Pancreas (tissue), 10 donors: ENCODE measurements at regions of chr2 and their contacts with region 1.

Region 1: DNA sequence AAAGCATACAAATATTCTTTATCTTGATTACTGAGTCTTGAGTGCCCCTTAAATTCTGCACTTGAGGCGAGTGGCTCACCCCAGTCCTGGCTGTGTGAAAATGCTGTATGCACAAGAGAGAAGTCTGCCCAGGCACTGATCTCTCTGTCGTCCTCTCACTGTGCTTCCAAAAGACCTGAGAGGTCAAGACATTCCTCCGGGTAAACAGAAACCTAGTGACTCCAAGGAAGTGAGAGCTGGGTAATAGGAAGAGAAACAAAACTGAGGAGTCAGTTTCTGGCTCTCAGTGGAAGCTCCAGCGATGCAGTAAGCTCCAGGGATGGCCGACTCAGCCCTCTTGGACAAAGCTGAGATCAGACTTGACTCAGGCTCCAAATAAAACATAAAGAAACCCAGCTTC is 70.9 kb downstream of the AAK1 start:
- DNase-seq: no peak
- ATAC-seq: peak in 3 of 4 donors; percentile 17 to 38 (median 34)
- H3K4me3 ChIP-seq: no peak overlapping the region
- H3K27ac ChIP-seq: no peak overlapping the region
- H3K4me1 ChIP-seq: peaks cover 14 to 23% (median 18%) of the 10 kb centered on the region in 3 donors
- H3K27me3 ChIP-seq: no peaks in the 10 kb centered on the region
- CTCF ChIP-seq: no peak

Region 2: DNA sequence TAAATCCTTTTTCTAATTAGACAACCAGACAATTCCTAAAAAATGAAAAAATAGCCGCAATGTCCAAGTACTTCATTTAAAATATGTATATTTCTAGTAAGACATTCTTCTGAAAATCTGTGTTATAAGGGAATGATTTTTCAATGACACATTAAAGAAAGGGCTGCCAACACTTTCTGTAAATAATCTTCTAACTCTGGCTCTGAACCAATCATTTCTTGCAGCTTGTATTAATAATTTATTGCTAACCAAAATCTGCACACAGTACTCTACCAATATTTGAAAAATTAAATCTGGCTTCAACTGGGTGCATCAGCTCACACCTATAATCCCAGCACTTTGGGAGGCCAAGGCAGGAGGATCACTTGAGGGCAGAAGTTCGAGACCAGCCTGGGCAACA is 143.7 kb before region 1 on chr2:
- intact Hi-C with region 1: no loop called
- DNase-seq: no peak
- ATAC-seq: peak; percentile 67 to 85 (median 82)
- H3K4me3 ChIP-seq: no peak overlapping the region
- H3K27ac ChIP-seq: peak overlapping the region in 2 of 4 donors; percentile 5 to 20
- H3K4me1 ChIP-seq: peaks cover 8 to 18% (median 12%) of the 10 kb centered on the region in 3 donors
- H3K27me3 ChIP-seq: no peaks in the 10 kb centered on the region
- CTCF ChIP-seq: no peak

Region 3: GRCh38 chr2:69634196-69634821 is 61.7 kb after region 1 on chr2:
- intact Hi-C with region 1: loop called in 1 of 3 experiments (anchors 10 kb)
- DNase-seq: no peak
- ATAC-seq: peak in 2 of 4 donors; percentile 30 to 38
- H3K4me3 ChIP-seq: no peak overlapping the region
- H3K27ac ChIP-seq: no peak overlapping the region
- H3K4me1 ChIP-seq: peaks cover 9 to 11% (median 10%) of the 10 kb centered on the region in 3 donors
- H3K27me3 ChIP-seq: no peaks in the 10 kb centered on the region
- CTCF ChIP-seq: no peak